ENCODE measurements at regions of chr14 and their contacts with region 1.

Region 1: DNA sequence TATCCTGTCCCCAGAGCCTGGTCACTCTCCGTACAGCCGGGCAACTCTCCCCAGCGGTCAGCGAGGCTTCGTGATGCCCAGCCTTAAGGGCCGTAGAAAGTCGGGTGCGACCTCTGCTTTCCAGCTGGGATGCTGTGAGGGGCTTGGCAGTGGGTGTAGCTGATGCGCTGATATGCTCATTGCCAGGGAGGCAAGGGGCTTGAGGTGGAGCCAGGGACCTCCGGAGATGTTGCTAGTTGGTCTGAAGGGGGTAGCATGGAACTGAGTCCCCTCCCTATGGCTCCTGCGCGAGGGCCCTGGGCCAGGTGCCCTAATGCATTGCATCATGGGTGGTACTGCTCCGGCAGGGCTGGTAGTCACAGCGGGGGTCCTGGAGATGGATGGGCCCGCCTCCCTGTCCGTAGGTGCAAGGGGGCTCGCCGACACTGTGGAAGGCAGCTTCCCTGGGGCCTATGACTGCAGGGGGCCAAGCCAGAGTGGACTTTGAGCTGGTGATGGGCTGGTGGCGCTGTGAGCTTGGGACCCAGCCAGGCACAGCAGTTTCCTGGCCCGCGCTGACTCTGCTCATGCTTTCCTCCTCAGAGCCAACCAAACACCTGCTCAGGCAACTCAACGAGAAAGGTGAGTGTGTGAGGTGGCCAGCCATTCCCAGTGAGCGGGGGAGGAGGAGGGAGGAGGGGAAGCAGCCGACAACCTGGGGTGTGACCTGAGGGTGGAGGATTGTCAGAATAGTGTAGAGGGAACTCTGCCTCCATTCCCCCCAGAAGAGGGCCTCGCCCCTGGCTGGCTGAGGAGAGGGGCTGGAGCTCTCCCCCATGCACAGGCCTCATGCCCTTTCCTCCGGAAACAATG is 32.3 kb downstream of the PLEKHG3 start:
- DNase-seq: peak in 1 of 2 experiments; percentile 62
- H3K4me3 ChIP-seq: no peak overlapping the region
- H3K27ac ChIP-seq: no peak overlapping the region
- H3K4me1 ChIP-seq: peaks cover 0 to 13% (median 6%) of the 10 kb centered on the region in 4 experiments; a peak in 6 of 7 replicates
- H3K27me3 ChIP-seq: no peaks in the 10 kb centered on the region
- CTCF ChIP-seq: peak; percentile 59 to 66 (median 63)
- EP300 ChIP-seq: no peak
- POLR2A ChIP-seq: no peak
- RAD21 ChIP-seq: peak; percentile 38 to 60; a peak in 3 of 4 replicates

Region 2: DNA sequence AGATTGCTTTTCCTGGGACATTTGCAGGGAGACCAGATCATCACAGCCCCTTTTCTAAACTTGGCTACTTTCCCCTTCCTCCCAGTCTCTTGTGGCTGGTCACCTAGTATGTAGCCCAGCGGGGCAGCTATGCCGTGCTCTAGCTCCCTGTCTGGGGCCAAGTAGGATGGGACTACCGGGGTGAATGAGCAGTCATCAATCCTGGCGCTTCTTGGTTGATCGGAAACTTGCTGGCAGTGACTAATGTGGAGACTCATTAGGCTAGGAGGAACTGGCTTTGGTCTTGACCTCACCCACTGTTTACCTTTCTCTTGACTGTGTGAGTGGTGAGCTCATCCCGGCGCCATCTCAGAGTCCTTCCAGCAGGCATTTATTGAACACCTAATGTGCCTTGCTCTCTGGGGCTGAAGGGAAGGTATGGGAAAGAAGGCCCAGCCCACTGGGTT is 16.3 kb before region 1 on chr14:
- CTCF ChIA-PET with region 1: interaction called, 18 read pairs
- POLR2A ChIA-PET with region 1: interaction called, 5 read pairs
- DNase-seq: no peak
- H3K4me3 ChIP-seq: no peak overlapping the region
- H3K27ac ChIP-seq: no peak overlapping the region
- H3K4me1 ChIP-seq: peaks cover 55 to 77% (median 63%) of the 10 kb centered on the region in 4 experiments
- H3K27me3 ChIP-seq: 0 out of 7 replicates have a peak, but pooled peaks cover 0 to 3% (median 0%) of the 10 kb centered on the region in 4 experiments
- CTCF ChIP-seq: no peak
- EP300 ChIP-seq: no peak
- POLR2A ChIP-seq: no peak
- RAD21 ChIP-seq: no peak